Heart left ventricle (tissue), 16 donors: ENCODE measurements at regions of chr12 and their contacts with region 1.

Region 1: GRCh38 chr12:21710948-21711775 is 53.5 kb upstream of the LDHB start:
- DNase-seq: no peak
- ATAC-seq: peak in 2 of 4 donors; percentile 64 to 73
- H3K4me3 ChIP-seq: no peak overlapping the region
- H3K27ac ChIP-seq: peak overlapping the region in 11 of 12 donors; percentile 10 to 65 (median 48)
- H3K4me1 ChIP-seq: peaks cover 0 to 19% (median 9%) of the 10 kb centered on the region in 12 donors
- H3K27me3 ChIP-seq: no peaks in the 10 kb centered on the region
- CTCF ChIP-seq: no peak
- POLR2A ChIP-seq: no peak

Region 2: DNA sequence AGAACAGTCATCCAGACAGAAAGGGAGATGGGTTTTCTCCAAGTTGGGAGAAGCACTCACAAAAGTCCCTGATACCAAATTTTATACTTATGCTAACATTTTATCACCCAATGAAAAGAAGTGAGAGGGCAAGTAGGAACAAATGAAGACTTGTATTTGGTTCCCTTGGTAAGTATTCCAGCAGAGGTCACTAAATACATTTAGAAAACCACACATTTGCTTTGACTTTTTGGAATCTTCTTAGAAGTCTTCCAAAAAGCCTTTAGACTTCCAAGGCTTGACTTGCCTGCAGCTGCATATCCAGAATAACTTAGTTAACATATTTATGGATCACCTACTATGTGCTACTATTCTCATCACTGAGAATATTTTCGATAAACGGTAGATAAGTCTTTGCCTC is 103.5 kb before region 1 on chr12:
- intact Hi-C with region 1: no loop called
- DNase-seq: no peak
- ATAC-seq: peak in 2 of 4 donors; percentile 51 to 52
- H3K4me3 ChIP-seq: no peak overlapping the region
- H3K27ac ChIP-seq: no peak overlapping the region
- H3K4me1 ChIP-seq: peaks cover 0 to 6% (median 0%) of the 10 kb centered on the region in 12 donors
- H3K27me3 ChIP-seq: no peaks in the 10 kb centered on the region
- CTCF ChIP-seq: peak; percentile 21 to 65 (median 55)
- POLR2A ChIP-seq: no peak

Region 3: DNA sequence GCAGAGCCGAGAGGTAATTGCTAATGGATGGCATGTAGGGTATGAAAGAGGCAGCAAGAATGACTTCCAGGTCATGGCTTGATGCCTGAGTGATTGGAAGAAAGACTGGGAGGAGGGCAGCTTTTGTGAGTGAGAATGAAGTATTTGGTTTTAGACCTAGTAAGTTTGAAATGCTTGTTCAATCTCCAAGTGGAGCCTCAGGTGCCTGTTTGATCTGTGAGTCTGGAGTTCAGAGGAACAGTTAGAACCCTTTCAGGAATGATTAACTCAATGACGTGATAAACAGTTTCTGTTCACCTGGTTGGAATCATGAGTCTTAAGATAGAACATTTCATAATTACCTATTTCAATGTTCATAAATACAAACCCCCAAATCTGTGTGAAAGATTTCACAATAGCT is 52.9 kb after region 1 on chr12:
- intact Hi-C with region 1: loop called in 3 of 10 experiments (anchors 5 kb)
- DNase-seq: no peak
- ATAC-seq: no peak
- H3K4me3 ChIP-seq: no peak overlapping the region
- H3K27ac ChIP-seq: peak overlapping the region in 1 of 12 donors; percentile 29
- H3K4me1 ChIP-seq: peaks cover 0 to 18% (median under 1%) of the 10 kb centered on the region in 12 donors
- H3K27me3 ChIP-seq: no peaks in the 10 kb centered on the region
- CTCF ChIP-seq: no peak
- POLR2A ChIP-seq: no peak

Region 4: DNA sequence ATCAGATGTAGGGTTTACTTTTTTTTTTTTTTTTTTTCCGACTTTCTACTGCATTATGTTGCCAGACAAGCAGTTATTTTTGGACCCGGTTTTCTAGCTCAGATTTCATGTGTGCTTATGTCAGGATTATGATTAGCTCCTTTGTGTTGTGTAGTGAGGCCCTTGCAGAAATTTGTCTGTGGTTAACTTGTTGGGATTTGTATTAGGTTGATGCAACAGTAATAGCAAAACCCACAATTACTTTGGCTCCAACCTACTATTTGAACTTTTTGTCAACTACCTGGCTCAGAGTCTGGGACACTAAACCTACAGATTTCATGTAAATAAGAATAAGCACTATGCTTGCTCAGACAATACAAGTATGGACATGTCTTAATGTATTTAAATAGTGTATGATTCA is 107.5 kb after region 1 on chr12:
- intact Hi-C with region 1: loop called in 1 of 10 experiments (anchors 10 kb)
- DNase-seq: no peak
- ATAC-seq: peak in 3 of 4 donors; percentile 27 to 55 (median 47)
- H3K4me3 ChIP-seq: no peak overlapping the region
- H3K27ac ChIP-seq: peak overlapping the region in 11 of 12 donors; percentile 22 to 60 (median 44)
- H3K4me1 ChIP-seq: peaks cover 0 to 40% (median 13%) of the 10 kb centered on the region in 12 donors
- H3K27me3 ChIP-seq: no peaks in the 10 kb centered on the region
- CTCF ChIP-seq: no peak
- POLR2A ChIP-seq: no peak

Region 5: DNA sequence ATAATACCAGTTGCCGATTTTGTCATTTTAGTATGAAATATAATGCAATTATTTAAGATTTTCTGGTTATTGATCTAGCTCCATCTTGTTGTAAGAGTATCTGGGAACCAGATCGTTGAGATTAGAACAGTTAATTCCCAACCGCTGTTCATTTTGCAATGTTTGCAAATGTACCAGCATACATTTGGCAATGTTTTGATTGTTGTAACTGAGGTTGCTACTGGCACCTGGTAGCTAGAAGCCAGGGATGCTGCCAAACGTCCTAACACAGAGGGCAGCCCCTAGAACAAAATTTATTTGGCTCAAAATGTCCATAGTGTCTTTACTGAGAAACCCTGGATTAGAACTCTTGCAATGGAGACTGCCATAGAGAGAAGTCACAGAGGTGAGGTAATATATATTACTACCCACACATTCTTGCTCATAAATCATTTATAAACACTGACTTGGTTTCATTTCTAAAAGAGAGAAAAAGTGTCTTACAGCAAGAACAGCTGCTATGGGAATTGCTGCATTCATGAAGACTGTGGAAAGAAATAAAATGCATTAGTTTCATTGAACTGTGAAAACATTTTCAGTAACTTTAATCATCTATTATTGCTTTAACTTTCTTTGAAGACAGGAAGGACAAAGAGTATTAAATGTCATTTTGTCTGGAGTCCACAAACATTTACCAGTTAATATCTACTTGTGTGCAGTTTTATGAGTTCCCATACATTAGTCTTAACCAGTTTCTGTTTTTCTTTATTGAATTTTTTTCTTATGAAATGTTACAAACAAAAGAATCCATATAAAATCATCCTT is 183.8 kb after region 1 on chr12:
- intact Hi-C with region 1: no loop called
- DNase-seq: no peak
- ATAC-seq: no peak
- H3K4me3 ChIP-seq: no peak overlapping the region
- H3K27ac ChIP-seq: peak overlapping the region in 1 of 12 donors; percentile 40
- H3K4me1 ChIP-seq: peaks cover 0 to 28% (median 14%) of the 10 kb centered on the region in 12 donors
- H3K27me3 ChIP-seq: no peaks in the 10 kb centered on the region
- CTCF ChIP-seq: no peak
- POLR2A ChIP-seq: no peak